ENCODE measurements at regions of chr20 and their contacts with region 1.

Region 1: DNA sequence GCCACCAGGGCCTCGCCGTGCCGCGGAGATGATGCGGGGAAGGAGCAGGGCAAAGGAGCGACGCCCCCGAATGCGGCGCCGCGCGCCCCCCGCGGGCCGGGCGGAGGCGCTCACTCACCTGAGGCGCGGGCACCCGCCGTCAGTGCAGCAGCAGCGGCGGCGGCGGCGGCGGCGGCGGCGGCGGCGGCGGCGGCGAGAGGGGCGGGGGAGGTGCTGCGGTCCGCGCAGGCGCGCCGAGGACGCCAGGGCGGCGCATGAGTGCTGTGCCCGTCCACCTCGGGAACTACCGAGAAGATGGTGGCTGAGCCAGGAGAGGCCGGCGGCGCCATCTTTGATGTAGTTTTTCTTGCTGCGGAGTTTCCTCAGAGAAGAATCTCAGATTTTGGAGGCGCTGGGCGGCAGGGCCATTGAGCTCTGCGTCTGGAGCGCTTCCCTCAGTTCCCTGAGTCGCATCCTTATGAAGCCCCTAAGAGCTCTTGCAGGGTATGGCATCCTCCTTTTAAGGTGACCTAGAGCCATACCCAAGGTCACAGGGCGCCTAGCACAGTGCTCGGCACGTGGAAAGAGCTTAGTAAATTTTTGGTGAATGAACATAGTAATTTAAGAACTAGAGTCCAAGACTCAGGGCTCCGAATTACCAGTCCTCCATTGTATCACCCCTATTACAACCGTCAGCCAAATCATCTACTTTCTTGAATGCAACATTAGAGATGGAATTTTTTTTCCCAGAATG is at the start of gene NDRG3:
- DNase-seq: peak; percentile 97
- H3K4me3 Mint-ChIP-seq: peak within 1 kb of the TSS; percentile 93
- H3K27ac Mint-ChIP-seq: peak within 1 kb of the TSS; percentile 89
- H3K4me1 Mint-ChIP-seq: peaks cover 17% of the 10 kb centered on the region
- H3K27me3 Mint-ChIP-seq: no peaks in the 10 kb centered on the region
- total RNA-seq, gene NDRG3: 24.7 and 25.3 TPM in 2 replicates

Region 2: DNA sequence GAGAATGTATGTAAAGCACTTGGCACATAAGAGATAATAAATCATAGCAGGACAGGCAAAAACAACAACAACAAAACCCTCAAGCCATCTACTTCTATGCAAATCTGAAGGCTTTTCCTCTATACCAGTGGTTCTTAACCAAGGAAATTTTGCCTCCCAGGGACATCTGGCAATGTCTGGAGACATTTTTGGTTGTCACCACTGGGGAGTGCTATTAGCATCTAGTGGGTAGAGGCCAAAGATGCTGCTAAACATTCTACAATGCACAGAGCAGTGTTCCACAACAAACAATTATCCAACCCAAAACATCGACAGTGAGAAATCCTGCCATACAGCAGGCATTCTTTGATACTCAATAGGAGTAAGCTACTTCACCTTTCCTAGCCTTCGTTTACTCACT is 28.4 kb before region 1 on chr20:
- intact Hi-C with region 1: loop called (anchors 1 kb)
- DNase-seq: peak; percentile 72
- H3K4me3 Mint-ChIP-seq: no peak overlapping the region
- H3K27ac Mint-ChIP-seq: no peak overlapping the region
- H3K4me1 Mint-ChIP-seq: peaks cover 9% of the 10 kb centered on the region
- H3K27me3 Mint-ChIP-seq: no peaks in the 10 kb centered on the region

Region 3: DNA sequence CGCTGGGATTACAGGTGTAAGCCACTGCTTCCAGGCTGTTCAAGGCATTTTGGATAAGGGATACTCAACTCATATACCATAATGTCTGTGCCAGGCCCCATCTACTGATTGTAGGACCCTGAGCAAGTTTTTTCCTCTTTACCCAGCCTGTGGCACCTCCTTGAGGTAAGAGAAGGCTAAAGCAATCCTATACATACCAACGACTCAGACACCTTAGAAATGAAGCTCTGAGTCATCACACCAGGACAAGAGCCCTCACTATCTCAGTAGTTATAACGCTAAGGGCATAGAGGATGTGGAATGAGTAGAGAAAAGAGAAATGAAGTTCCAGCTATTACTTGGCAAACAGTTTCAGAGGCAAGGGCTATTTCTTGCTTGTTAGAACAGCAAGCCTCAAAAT is 17.1 kb before region 1 on chr20:
- intact Hi-C with region 1: loop called (anchors 1 kb)
- DNase-seq: peak; percentile 64
- H3K4me3 Mint-ChIP-seq: no peak overlapping the region
- H3K27ac Mint-ChIP-seq: peak overlapping the region; percentile 45
- H3K4me1 Mint-ChIP-seq: peaks cover 18% of the 10 kb centered on the region
- H3K27me3 Mint-ChIP-seq: no peaks in the 10 kb centered on the region

Region 4: DNA sequence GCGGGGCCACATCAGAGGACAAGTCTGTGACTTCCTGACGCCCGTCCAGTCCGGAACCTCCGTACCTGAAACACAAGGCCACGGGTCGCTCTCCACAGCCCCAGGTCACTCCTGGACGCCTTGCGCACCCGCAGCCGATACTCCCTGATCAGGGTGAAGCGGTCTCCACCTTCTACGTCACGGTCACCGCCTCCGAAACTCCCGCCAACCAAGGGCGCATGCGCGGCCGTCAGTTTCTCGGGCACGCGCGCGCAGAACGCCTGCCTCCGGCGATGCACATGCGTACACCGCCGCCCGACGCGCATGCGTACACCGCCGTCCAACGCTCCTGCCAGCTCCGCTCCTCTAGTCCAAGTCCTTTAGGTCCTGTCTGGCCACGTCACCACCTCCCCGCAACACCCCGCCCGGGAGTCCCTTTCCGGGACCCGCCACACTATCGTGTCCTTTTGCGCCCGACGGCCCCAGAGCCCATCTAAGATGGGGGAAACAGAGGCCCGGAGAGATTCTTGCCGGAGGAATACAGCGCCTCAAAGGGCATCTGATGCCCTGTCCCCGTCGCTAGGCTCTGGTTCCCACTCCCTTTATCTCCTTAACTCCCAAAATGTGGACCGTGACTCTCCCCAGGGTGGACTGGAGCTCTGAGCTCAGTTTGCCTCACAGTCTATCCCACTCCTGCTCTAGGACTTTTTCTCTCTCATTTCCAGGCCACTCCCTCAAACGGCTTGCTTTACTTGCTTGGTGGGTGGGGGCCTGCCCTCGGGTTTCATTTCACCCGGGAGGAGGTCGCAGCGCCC is 27.7 kb after region 1 on chr20 and contains the start of gene DSN1:
- intact Hi-C with region 1: loop called (anchors 1 kb)
- DNase-seq: peak; percentile 100
- H3K4me3 Mint-ChIP-seq: peak within 1 kb of the TSS; percentile 87
- H3K27ac Mint-ChIP-seq: peak within 1 kb of the TSS; percentile 94
- H3K4me1 Mint-ChIP-seq: peaks cover 36% of the 10 kb centered on the region
- H3K27me3 Mint-ChIP-seq: peaks cover 2% of the 10 kb centered on the region
- total RNA-seq, gene DSN1: 23.8 and 24.5 TPM in 2 replicates